ENCODE measurements at regions of chr3 and their contacts with region 1.

Region 1: GRCh38 chr3:53255775-53256703 is at the start of gene TKT:
- DNase-seq: peak; percentile 75
- ATAC-seq: peak; percentile 87
- H3K4me3 Mint-ChIP-seq: peak within 1 kb of the TSS; percentile 90
- H3K27ac Mint-ChIP-seq: peak within 1 kb of the TSS; percentile 73
- H3K4me1 Mint-ChIP-seq: peaks cover 40% of the 10 kb centered on the region
- H3K27me3 Mint-ChIP-seq: no peaks in the 10 kb centered on the region
- CTCF ChIP-seq: no peak
- total RNA-seq, gene TKT: 154 TPM in 2 replicates

Region 2: DNA sequence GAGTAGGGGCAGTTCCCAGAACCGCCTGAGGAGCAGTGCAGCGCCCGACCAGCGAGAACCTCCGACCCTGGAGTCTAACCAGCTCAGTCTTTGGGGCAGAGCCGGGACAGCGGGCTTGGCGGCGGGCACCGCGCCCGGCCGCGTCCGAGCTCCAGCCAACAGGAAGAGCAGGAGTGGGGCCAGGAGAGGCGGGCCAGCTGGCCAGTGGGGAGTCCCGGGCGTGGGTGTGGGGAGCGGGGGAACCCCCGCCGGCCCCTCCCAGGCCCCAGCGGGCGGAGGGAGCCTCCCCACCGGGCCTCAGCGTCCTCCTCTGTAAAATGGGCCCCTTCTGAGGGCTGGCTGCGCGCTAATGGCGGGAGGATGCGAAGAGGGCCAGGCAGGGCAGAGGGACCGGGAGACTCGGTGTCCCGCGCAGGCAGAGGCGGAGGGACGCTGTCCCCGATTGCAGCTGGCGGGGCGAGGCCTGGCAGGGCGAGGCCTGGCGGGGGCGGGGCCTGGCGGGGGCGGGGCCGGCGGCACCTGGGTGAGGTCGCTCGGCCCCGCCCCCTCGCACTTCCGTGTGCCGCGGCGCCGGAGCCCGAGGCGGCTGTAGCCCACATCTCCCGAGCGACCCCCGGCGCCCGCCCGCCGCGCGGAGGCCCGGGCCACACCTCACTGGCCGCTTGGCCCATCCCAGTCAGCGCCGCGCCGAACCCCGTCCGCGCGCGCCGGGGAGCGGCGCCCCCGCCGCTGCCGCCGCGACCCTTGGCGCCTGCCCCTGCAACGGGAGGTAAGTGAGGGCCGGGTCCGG is 95.2 kb before region 1 on chr3 and contains the start of gene PRKCD:
- CTCF ChIA-PET with region 1: interaction called, 3 read pairs
- POLR2A ChIA-PET with region 1: interaction called, 4 read pairs
- intact Hi-C with region 1: loop called (anchors 2 kb)
- DNase-seq: peak; percentile 77
- ATAC-seq: peak; percentile 66
- H3K4me3 Mint-ChIP-seq: peak within 1 kb of the TSS; percentile 87
- H3K27ac Mint-ChIP-seq: peak within 1 kb of the TSS; percentile 89
- H3K4me1 Mint-ChIP-seq: peaks cover 58% of the 10 kb centered on the region
- H3K27me3 Mint-ChIP-seq: peaks cover 2% of the 10 kb centered on the region
- CTCF ChIP-seq: no peak
- total RNA-seq, gene PRKCD: 60.4 and 63.9 TPM in 2 replicates

Region 3: GRCh38 chr3:53219895-53220483 is 36.0 kb before region 1 on chr3:
- CTCF ChIA-PET with region 1: no interaction called
- POLR2A ChIA-PET with region 1: no interaction called
- intact Hi-C with region 1: loop called (anchors 5 kb)
- DNase-seq: peak; percentile 53
- ATAC-seq: peak; percentile 81
- H3K4me3 Mint-ChIP-seq: no peak overlapping the region
- H3K27ac Mint-ChIP-seq: no peak overlapping the region
- H3K4me1 Mint-ChIP-seq: peaks cover 13% of the 10 kb centered on the region
- H3K27me3 Mint-ChIP-seq: no peaks in the 10 kb centered on the region
- CTCF ChIP-seq: no peak

Region 4: DNA sequence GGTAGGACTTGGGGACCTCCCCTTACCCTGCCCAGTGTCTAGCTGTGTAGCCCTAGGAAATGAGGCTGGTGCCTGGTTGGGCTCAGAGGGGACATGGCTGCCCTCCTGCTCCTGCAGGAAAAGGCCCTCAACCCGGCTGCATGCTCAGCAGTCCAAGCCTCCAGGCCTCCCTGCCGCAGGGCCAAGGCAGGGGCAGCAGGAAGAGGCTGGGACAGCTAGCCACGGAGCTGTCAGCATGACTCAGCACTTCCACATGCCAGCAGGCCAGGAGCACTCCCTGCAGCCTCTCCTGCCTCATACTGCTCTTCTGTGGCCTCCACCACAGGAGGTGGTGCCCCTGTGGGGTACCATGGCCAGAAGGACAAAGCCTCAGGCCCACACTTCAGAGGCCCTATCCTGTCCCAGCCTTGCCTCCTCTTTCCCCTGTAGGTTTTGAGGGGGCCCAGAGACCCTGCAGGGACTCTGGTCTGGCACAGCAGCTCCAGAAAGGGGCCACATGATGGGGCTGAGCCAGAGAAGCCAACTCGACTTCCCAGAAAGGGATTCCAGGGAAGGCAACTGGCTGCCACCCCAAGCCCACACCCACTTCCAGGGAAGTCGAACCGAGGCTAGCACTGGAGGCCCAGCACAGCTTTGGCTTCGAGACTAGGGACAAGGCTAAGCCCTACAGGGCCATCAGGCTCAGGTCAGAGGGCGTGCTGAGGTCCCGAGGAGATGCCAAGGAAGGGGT is 19.8 kb before region 1 on chr3:
- CTCF ChIA-PET with region 1: no interaction called
- POLR2A ChIA-PET with region 1: no interaction called
- intact Hi-C with region 1: no loop called
- DNase-seq: no peak
- ATAC-seq: no peak
- H3K4me3 Mint-ChIP-seq: no peak overlapping the region
- H3K27ac Mint-ChIP-seq: no peak overlapping the region
- H3K4me1 Mint-ChIP-seq: no peaks in the 10 kb centered on the region
- H3K27me3 Mint-ChIP-seq: no peaks in the 10 kb centered on the region
- CTCF ChIP-seq: no peak

Region 5: GRCh38 chr3:53274938-53275605 is 19.0 kb after region 1 on chr3:
- CTCF ChIA-PET with region 1: no interaction called
- POLR2A ChIA-PET with region 1: no interaction called
- intact Hi-C with region 1: no loop called
- DNase-seq: no peak
- ATAC-seq: no peak
- H3K4me3 Mint-ChIP-seq: no peak overlapping the region
- H3K27ac Mint-ChIP-seq: no peak overlapping the region
- H3K4me1 Mint-ChIP-seq: no peaks in the 10 kb centered on the region
- H3K27me3 Mint-ChIP-seq: no peaks in the 10 kb centered on the region
- CTCF ChIP-seq: no peak

Region 6: DNA sequence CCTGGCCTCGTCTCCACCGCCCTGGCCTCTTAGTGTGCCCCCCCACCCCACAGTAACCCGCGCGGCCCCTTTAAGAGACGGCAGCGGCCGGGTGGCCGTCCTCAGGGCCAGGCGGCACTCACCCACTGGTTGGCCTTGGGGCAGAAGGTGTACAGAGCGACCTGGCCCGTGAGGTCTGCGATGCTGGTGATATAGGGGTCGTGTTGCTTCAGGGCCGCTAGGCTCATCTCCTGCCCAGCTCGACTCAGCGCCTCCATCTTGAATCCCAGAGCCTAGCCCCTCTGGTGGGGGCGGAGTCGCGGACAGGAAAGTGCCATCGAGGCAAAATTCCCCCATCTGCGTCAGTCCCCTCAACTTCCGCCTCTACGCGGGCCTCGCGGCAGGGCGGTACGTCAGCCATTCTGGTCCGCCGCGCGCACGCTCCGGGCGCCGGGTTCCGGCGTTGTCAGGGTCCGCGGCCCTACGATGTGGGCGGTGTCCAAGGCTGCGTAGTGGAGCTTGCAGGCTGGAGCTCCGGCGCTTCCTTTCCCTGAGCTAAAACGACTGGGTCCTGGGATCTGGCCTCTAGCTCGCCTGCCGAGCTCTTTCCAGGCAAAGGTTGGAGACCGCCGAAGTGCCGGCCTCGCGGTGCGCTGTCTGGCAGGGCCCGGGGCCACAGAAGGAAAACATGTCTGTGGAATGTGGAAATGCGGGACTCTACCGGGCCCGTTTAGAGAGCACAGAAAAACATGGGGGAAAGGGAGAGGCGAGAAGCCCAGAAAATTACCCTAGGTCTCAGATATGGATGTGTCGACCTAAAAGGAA is 91.4 kb after region 1 on chr3 and contains the start of gene DCP1A:
- CTCF ChIA-PET with region 1: no interaction called
- POLR2A ChIA-PET with region 1: no interaction called
- intact Hi-C with region 1: loop called (anchors 1 kb)
- DNase-seq: peak; percentile 98
- ATAC-seq: peak; percentile 95
- H3K4me3 Mint-ChIP-seq: peak within 1 kb of the TSS; percentile 98
- H3K27ac Mint-ChIP-seq: peak within 1 kb of the TSS; percentile 95
- H3K4me1 Mint-ChIP-seq: peaks cover 30% of the 10 kb centered on the region
- H3K27me3 Mint-ChIP-seq: no peaks in the 10 kb centered on the region
- CTCF ChIP-seq: no peak
- total RNA-seq, gene DCP1A: 35.1 and 39.3 TPM in 2 replicates